ENCODE measurements at regions of chr5 and their contacts with region 1.

Region 1: DNA sequence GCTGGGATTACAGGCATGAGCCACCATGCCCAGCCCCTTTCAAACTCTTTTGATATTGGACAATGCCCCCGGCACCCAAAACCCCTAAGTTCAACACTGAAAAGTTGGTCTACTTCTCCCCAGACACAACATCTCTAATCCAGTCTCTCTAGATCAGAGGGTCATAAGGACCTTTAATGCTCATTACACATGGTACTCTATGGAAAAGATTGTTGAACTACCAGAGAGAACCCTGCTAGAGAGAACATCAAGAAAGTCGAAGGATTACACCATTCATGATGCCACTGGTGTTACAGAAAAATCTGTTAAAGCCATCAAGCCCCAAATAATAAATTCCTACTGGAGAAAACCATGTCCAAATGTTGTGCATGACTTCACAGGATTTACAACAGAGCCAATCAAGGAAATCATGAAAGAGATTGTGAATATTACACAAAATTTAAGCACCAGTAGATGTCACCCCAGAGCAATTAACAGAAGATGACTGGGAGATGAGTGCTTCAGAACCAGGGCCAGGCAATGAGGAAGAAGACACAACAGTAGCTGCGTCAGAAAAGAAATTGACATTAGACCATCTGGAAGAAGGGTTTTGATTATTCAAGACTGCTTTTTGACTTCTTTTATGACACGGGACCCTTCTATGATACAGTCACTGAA is 28.3 kb upstream of the NIPAL4 start:
- DNase-seq: no peak
- H3K4me3 ChIP-seq: no peak overlapping the region
- H3K27ac ChIP-seq: peak overlapping the region in 3 of 4 donors; percentile 7 to 41 (median 22)
- H3K4me1 ChIP-seq: no peaks in the 10 kb centered on the region
- H3K27me3 ChIP-seq: no peaks in the 10 kb centered on the region
- CTCF ChIP-seq: peak in 3 of 4 experiments; percentile 46 to 53 (median 52)
- EP300 ChIP-seq: no peak
- POLR2A ChIP-seq: no peak

Region 2: DNA sequence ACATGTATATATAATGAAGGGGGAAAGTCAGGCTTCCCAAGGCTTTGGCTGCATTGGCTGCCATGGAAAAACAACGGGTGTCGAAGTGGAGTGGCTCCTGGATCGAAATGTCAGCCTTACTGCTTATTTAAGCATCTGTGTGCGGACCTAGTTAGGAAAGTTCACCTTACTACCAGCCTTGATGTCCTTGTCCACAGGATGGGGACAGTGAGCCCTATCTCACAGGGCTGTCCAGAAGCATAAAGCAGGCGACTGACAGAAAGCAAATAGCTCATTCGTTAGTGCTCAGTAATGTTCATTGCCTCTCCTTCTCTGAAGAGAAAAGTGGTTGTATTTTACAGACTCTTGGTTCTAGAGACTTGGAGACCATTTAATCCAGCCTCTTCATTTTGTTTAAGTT is 53.2 kb before region 1 on chr5:
- intact Hi-C with region 1: no loop called
- DNase-seq: no peak
- H3K4me3 ChIP-seq: no peak overlapping the region
- H3K27ac ChIP-seq: peak overlapping the region in 3 of 4 donors; percentile 82 to 94 (median 88)
- H3K4me1 ChIP-seq: peaks cover 0 to 68% (median 39%) of the 10 kb centered on the region in 4 donors
- H3K27me3 ChIP-seq: no peaks in the 10 kb centered on the region
- CTCF ChIP-seq: no peak
- EP300 ChIP-seq: no peak
- POLR2A ChIP-seq: no peak

Region 3: GRCh38 chr5:157390551-157391297 is 40.9 kb before region 1 on chr5:
- intact Hi-C with region 1: loop called (anchors 5 kb)
- DNase-seq: no peak
- H3K4me3 ChIP-seq: no peak overlapping the region
- H3K27ac ChIP-seq: peak overlapping the region; percentile 39 to 94 (median 85)
- H3K4me1 ChIP-seq: peaks cover 0 to 53% (median 40%) of the 10 kb centered on the region in 4 donors
- H3K27me3 ChIP-seq: no peaks in the 10 kb centered on the region
- CTCF ChIP-seq: no peak
- EP300 ChIP-seq: no peak
- POLR2A ChIP-seq: no peak

Region 4: DNA sequence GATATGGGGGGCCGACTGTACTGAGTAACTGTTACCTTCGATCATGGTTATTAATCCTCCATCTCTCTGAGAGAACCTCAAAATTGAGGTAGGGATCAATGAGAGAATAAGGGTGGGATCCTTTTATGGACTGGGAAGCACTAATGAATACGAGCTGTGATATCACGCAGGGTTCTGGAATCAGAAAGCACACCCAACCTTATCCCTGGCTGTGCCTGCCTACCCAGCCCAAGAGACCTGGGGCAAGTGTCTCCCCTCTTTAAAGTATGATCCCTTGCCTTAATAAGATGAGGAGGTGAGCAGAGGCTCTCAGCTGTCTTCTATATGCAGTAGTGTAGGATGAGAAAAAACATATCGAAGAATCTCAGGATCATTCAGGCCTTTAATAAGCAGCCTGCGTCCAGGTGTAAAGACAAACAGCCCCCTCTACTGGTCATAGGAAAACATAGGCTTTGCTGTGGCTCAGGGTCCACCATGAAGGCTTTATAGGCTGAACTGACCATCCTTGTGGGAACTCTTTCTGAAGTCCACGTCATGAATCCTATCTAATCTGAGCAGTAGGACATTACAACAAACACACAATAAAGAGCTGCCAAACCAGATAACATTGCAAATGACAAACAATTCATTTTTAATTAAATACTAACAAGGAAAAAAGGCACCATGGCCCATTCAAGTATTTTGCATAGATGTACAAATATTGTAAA is 45.2 kb after region 1 on chr5:
- intact Hi-C with region 1: loop called (anchors 2 kb)
- DNase-seq: peak; percentile 67
- H3K4me3 ChIP-seq: no peak overlapping the region
- H3K27ac ChIP-seq: peak overlapping the region; percentile 38 to 88 (median 84)
- H3K4me1 ChIP-seq: peaks cover 0 to 86% (median 53%) of the 10 kb centered on the region in 4 donors
- H3K27me3 ChIP-seq: no peaks in the 10 kb centered on the region
- CTCF ChIP-seq: peak; percentile 68 to 88 (median 80)
- EP300 ChIP-seq: no peak
- POLR2A ChIP-seq: no peak

Region 5: GRCh38 chr5:159301346-159301911 is 1869.8 kb after region 1 on chr5:
- intact Hi-C with region 1: no loop called
- DNase-seq: no peak
- H3K4me3 ChIP-seq: no peak overlapping the region
- H3K27ac ChIP-seq: no peak overlapping the region
- H3K4me1 ChIP-seq: no peaks in the 10 kb centered on the region
- H3K27me3 ChIP-seq: no peaks in the 10 kb centered on the region
- CTCF ChIP-seq: no peak
- EP300 ChIP-seq: no peak
- POLR2A ChIP-seq: no peak